Mammary epithelial cell (primary cell): ENCODE measurements at regions of chr10 and their contacts with region 1.

Region 1: DNA sequence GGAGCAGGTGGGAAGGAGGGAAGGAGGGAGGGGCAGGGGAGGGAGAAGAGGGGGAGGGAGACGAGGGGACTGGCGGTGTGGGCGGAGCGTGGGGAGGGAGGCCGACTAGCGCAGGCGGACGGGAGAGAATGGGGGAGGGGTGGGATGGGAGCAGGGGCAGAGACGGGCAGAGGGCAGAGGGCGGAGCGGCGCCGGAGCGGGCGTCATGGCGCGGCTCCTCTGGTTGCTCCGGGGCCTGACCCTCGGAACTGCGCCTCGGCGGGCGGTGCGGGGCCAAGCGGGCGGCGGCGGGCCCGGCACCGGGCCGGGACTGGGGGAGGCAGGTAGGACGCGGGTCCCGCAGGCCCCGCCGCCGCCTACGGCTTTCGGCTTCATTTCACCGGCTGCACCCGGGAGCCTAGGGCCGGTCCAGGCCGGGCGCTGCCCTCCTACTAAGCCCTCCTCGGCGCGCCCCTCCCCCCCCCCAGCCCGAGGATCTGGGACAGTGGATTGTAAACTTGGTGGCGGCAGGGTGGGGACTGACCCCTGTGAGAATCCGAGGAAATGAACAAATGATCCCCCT is at the start of gene MSRB2:
- DNase-seq: peak; percentile 88
- H3K4me3 ChIP-seq: peak within 1 kb of the TSS; percentile 67 to 81 (median 71)
- H3K27ac ChIP-seq: peak within 1 kb of the TSS; percentile 47
- H3K4me1 ChIP-seq: peaks cover 29% of the 10 kb centered on the region
- H3K27me3 ChIP-seq: no peaks in the 10 kb centered on the region
- CTCF ChIP-seq: no peak
- total RNA-seq, gene MSRB2: 7.8 to 20.9 TPM

Region 2: DNA sequence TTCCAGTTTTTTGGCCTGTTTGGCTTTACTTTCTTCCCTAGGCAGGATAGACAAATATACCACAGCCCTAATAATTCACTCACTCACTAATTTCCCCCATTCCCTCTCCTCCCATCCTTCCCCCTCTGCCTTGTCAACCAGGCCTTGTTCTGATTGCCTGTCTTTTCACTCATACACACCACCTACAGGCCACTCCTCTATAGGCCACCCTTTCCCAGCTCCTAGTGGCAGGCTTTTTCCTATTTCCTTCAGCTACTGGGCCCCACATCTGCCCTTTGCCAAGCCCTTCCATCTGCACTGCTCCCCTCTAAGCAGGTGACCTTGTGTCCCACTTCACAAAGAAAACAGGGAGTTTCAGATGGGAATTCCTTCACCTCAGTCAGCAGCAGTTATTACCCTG is 59.9 kb before region 1 on chr10:
- CTCF ChIA-PET with region 1: interaction called, 16 read pairs
- dilution Hi-C with region 1: no loop called
- in situ Hi-C with region 1: no loop called
- intact Hi-C with region 1: no loop called
- DNase-seq: peak; percentile 2
- H3K4me3 ChIP-seq: no peak overlapping the region
- H3K27ac ChIP-seq: no peak overlapping the region
- H3K4me1 ChIP-seq: no peaks in the 10 kb centered on the region
- H3K27me3 ChIP-seq: peaks cover 7% of the 10 kb centered on the region
- CTCF ChIP-seq: peak; percentile 32 to 47